ENCODE measurements at regions of chr1 and their contacts with region 1.

Region 1: DNA sequence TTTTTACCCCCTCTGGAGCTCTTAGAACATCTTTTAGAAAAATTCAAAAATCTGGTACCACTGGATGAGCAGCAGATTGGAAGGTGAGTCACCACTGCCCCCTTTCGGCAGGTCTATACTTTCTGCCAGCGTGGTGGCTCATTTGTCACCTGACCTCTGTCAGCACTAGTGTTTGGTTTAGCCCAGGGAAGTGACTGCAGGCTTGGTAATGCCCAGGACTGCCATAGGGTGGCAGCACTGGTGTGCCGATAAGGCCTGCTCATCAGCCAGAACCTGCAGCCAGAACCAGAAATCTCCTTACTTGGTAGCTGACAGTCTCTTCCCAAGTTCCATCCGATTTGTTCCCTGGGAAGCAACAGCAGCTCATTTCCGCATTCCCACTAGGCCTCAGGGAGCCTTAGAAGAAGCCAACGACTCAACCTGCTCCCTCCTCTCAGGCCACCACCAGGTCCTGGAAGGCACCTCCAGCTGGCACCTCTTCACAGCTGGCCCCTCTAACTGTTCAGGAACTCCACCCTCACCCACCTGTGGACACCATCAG is 6.8 kb downstream of the SMIM12 start:
- DNase-seq: peak; percentile 94
- H3K4me3 Mint-ChIP-seq: no peak overlapping the region
- H3K27ac Mint-ChIP-seq: peak overlapping the region; percentile 63
- H3K4me1 Mint-ChIP-seq: peaks cover 13% of the 10 kb centered on the region
- H3K27me3 Mint-ChIP-seq: no peaks in the 10 kb centered on the region

Region 2: GRCh38 chr1:34786521-34787325 is 66.0 kb before region 1 on chr1:
- CTCF ChIA-PET with region 1: interaction called, 67 read pairs
- POLR2A ChIA-PET with region 1: no interaction called
- intact Hi-C with region 1: loop called (anchors 1 kb)
- DNase-seq: peak; percentile 80
- H3K4me3 Mint-ChIP-seq: no peak overlapping the region
- H3K27ac Mint-ChIP-seq: no peak overlapping the region
- H3K4me1 Mint-ChIP-seq: peaks cover 7% of the 10 kb centered on the region
- H3K27me3 Mint-ChIP-seq: peaks cover 50% of the 10 kb centered on the region

Region 3: GRCh38 chr1:34792868-34793727 is 59.6 kb before region 1 on chr1 and contains the start of gene GJA4:
- CTCF ChIA-PET with region 1: interaction called, 67 read pairs
- POLR2A ChIA-PET with region 1: no interaction called
- intact Hi-C with region 1: no loop called
- DNase-seq: no peak
- H3K4me3 Mint-ChIP-seq: no peak within 1 kb of the TSS
- H3K27ac Mint-ChIP-seq: no peak within 1 kb of the TSS
- H3K4me1 Mint-ChIP-seq: peaks cover 18% of the 10 kb centered on the region
- H3K27me3 Mint-ChIP-seq: peaks cover 37% of the 10 kb centered on the region
- total RNA-seq, gene GJA4: not detected

Region 4: DNA sequence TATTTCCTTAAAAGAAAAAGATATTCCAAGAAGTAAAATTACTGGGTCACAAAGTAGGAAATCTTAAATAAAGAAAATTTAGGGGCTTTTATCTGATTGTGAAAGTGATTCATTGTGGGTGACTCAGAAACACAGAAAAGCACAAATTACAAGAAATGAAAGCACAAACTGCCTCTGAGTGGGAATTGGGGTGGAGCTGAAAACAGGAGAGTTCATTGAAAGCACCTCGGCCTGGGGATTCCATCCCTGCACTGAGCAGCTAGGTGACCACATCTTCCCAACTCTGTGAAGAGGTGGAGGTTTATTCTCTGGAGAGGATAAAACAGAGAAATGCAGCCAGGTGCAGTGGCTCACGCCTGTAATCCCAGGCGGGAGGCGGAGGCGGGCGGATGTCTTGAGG is 52.5 kb before region 1 on chr1:
- CTCF ChIA-PET with region 1: interaction called, 14 read pairs
- POLR2A ChIA-PET with region 1: no interaction called
- intact Hi-C with region 1: no loop called
- DNase-seq: peak; percentile 55
- H3K4me3 Mint-ChIP-seq: no peak overlapping the region
- H3K27ac Mint-ChIP-seq: peak overlapping the region; percentile 53
- H3K4me1 Mint-ChIP-seq: peaks cover 21% of the 10 kb centered on the region
- H3K27me3 Mint-ChIP-seq: peaks cover 5% of the 10 kb centered on the region

Region 5: GRCh38 chr1:34865981-34866761 is 13.4 kb after region 1 on chr1:
- CTCF ChIA-PET with region 1: interaction called, 82 read pairs
- POLR2A ChIA-PET with region 1: interaction called, 3 read pairs
- intact Hi-C with region 1: no loop called
- DNase-seq: peak; percentile 96
- H3K4me3 Mint-ChIP-seq: peak overlapping the region; percentile 74
- H3K27ac Mint-ChIP-seq: peak overlapping the region; percentile 81
- H3K4me1 Mint-ChIP-seq: peaks cover 17% of the 10 kb centered on the region
- H3K27me3 Mint-ChIP-seq: no peaks in the 10 kb centered on the region

Region 6: GRCh38 chr1:35062518-35063196 is 209.9 kb after region 1 on chr1:
- CTCF ChIA-PET with region 1: no interaction called
- POLR2A ChIA-PET with region 1: no interaction called
- intact Hi-C with region 1: no loop called
- DNase-seq: no peak
- H3K4me3 Mint-ChIP-seq: no peak overlapping the region
- H3K27ac Mint-ChIP-seq: no peak overlapping the region
- H3K4me1 Mint-ChIP-seq: no peaks in the 10 kb centered on the region
- H3K27me3 Mint-ChIP-seq: peaks cover 17% of the 10 kb centered on the region

Region 7: DNA sequence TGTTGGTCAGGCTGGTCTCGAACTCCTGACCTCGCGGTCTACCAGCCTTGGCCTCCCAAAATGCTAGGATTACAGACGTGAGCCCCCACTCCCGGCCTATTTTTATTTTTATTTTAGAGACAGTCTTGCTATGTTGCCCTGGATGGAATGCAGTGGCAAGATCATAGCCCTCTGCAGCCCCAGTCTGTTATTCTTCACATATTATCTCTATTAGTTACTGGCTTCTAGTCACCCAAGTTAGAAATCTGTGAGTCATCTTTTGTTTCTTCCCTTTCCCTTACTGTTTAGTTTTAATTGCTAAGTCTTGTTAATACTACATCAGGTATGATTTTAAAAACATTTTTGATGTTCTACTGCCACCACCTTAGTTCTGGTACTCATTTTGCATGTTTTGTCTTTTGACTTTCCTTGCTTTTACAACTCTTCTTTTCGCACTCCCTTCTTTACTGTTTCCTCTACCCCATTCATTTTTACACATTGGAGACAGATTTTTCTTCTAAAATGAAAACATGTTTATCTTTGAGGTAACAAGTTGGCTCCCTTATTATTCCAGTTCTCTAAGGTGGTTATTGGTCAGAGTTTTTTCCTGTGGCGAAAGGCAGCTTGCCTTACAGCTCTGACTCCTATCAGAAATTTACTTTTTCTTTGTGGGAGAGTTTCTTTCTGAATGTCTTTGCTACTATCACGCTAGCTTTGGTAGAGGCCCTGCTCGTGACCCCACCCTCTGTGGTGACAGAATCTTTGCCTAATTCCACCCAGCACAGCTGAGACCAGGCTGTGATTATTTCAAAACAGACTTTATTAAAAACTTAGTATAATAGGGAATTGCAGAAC is 435.3 kb after region 1 on chr1:
- CTCF ChIA-PET with region 1: no interaction called
- POLR2A ChIA-PET with region 1: no interaction called
- intact Hi-C with region 1: loop called (anchors 10 kb)
- DNase-seq: no peak
- H3K4me3 Mint-ChIP-seq: no peak overlapping the region
- H3K27ac Mint-ChIP-seq: no peak overlapping the region
- H3K4me1 Mint-ChIP-seq: peaks cover 27% of the 10 kb centered on the region
- H3K27me3 Mint-ChIP-seq: no peaks in the 10 kb centered on the region